Activated naive CD4-positive, alpha-beta T cell treated with anti-CD3 and anti-CD28 coated beads for 36 hours (primary cell): ENCODE measurements at regions of chr1 and their contacts with region 1.

Region 1: GRCh38 chr1:10032590-10033358 is at the start of gene UBE4B:
- DNase-seq: peak; percentile 98
- H3K4me3 Mint-ChIP-seq: peak within 1 kb of the TSS; percentile 94
- H3K27ac Mint-ChIP-seq: peak within 1 kb of the TSS; percentile 88
- H3K4me1 Mint-ChIP-seq: peaks cover 24% of the 10 kb centered on the region
- H3K27me3 Mint-ChIP-seq: no peaks in the 10 kb centered on the region
- total RNA-seq, gene UBE4B: 20.1 to 21.3 TPM

Region 2: GRCh38 chr1:9874959-9875635 is 157.7 kb before region 1 on chr1:
- CTCF ChIA-PET with region 1: interaction called, 3 read pairs
- intact Hi-C with region 1: loop called (anchors 2 kb)
- DNase-seq: peak; percentile 84
- H3K4me3 Mint-ChIP-seq: no peak overlapping the region
- H3K27ac Mint-ChIP-seq: no peak overlapping the region
- H3K4me1 Mint-ChIP-seq: no peaks in the 10 kb centered on the region
- H3K27me3 Mint-ChIP-seq: no peaks in the 10 kb centered on the region

Region 3: GRCh38 chr1:9942939-9943788 is 89.6 kb before region 1 on chr1 and contains the starts of genes LZIC and NMNAT1:
- CTCF ChIA-PET with region 1: no interaction called
- intact Hi-C with region 1: loop called (anchors 1 kb)
- DNase-seq: peak; percentile 94
- H3K4me3 Mint-ChIP-seq: peak within 1 kb of the TSS; percentile 95
- H3K27ac Mint-ChIP-seq: peak within 1 kb of the TSS; percentile 92
- H3K4me1 Mint-ChIP-seq: peaks cover 27% of the 10 kb centered on the region
- H3K27me3 Mint-ChIP-seq: no peaks in the 10 kb centered on the region
- total RNA-seq, gene LZIC: 26.1 to 27.0 TPM
- total RNA-seq, gene NMNAT1: 7.5 to 8.0 TPM

Region 4: DNA sequence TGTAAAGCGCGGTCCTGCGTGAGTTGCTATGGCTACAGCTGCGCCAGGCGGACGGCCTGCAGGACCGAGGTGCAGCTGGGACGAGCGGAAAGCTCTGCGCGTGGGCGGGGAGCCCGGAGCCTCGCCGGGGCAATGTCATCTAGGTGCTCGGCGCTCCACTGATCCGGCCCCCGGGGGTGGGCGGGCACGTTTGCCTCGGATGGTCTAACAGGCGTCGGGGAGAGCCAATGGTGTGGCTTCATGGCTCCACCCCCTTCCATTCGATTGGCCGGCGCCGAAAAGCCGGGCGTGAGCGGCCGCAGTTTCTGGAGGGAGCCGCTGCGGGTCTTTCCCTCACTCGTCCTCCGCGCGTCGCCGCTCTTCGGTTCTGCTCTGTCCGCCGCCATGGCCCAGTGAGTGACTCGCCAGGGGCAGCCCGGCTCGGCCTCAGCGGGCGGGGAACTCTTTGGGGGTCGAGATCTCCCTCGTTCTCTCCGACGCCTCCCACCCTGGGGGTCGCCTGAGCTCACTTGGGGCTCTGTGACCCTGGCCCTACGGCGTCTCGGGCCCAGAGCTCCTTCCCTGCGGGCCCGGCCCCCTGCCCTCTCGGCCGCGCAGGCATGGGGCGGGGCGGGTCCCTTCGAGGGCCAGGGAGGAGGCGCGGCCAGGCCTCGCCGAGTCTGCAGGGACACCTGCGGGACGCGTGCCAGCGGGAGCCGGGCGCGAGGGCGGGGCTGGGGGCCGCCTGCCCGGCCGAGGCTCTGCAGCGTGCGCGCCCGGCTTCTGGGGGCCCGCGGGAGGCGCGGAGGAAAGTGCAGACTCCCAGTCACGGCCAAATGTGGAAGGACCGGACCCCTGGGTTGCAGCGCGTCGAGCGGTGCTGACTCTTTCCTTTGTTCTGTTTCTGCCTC is 366.2 kb after region 1 on chr1 and contains the start of gene PGD:
- CTCF ChIA-PET with region 1: no interaction called
- intact Hi-C with region 1: loop called (anchors 1 kb)
- DNase-seq: peak; percentile 98
- H3K4me3 Mint-ChIP-seq: peak within 1 kb of the TSS; percentile 83
- H3K27ac Mint-ChIP-seq: no peak within 1 kb of the TSS
- H3K4me1 Mint-ChIP-seq: peaks cover 25% of the 10 kb centered on the region
- H3K27me3 Mint-ChIP-seq: no peaks in the 10 kb centered on the region
- total RNA-seq, gene PGD: 94.8 to 101 TPM